Mammary epithelial cell (primary cell): ENCODE measurements at regions of chr17 and their contacts with region 1.

Region 1: GRCh38 chr17:42138749-42139492 is 15.9 kb downstream of the RAB5C start:
- DNase-seq: no peak
- H3K4me3 ChIP-seq: no peak overlapping the region
- H3K27ac ChIP-seq: no peak overlapping the region
- H3K4me1 ChIP-seq: peaks cover 7% of the 10 kb centered on the region
- H3K27me3 ChIP-seq: no peaks in the 10 kb centered on the region
- CTCF ChIP-seq: no peak

Region 2: DNA sequence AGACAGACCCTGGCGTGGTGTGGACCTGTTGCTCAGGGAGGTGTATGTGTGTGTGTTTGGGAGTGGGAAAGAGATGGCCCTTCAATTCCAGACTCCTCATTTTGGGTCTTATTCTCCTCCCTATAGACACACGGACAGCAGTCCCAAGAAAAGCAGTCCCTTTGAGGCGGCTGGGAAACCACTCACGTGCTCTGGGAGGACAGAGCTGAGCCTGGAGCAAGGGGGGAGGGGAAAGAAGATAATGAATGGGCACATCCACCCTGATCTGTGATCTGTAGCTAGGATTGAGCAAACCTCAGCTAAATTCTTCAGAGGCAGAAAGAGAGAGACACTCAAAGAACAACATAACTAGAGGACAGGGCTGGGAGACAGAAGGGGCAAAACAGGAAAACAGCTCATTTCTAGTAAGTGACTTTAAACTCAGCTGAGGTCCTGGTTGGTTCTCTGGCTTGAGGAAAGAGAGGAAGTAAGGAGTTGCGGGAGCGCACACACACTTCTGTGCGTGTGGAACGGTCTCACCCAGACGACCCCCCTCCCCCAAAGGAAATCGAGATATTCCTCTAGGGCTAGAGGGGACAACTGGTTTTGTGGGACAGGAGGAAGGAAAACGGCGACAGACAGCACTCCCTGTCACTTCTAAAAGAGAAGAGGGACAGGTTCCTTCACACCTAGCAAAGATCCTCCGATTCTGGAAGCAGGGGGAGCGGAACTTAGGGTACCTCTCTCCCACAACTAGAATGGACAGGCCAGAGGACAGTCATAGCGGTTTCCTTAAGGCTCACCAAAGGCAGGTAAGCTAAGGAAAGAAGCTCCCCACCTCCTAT is 15.2 kb after region 1 on chr17:
- CTCF ChIA-PET with region 1: no interaction called
- dilution Hi-C with region 1: no loop called
- in situ Hi-C with region 1: no loop called
- intact Hi-C with region 1: loop called (anchors 2 kb)
- DNase-seq: no peak
- H3K4me3 ChIP-seq: peak overlapping the region; percentile 57 to 80 (median 69)
- H3K27ac ChIP-seq: peak overlapping the region; percentile 37
- H3K4me1 ChIP-seq: peaks cover 10% of the 10 kb centered on the region
- H3K27me3 ChIP-seq: no peaks in the 10 kb centered on the region
- CTCF ChIP-seq: no peak

Region 3: DNA sequence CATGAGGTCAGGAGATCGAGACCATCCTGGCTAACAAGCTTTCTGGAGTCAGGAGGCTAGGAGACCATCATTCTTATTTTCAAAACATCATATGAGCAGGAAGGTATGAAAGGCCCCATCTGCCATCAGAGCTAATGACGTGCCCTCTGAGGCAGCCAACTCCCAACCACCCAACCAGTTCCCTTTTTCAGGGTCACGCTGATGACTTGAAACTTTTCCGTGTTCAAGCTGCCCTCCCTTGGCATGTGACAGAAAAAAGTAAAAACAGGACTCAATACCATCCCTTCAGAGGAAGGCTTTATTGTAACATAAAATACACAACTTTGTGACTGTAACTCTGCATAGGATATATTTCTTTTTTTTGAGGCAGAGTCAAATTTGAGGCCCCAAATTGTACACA is 60.0 kb after region 1 on chr17:
- CTCF ChIA-PET with region 1: no interaction called
- dilution Hi-C with region 1: no loop called
- in situ Hi-C with region 1: no loop called
- intact Hi-C with region 1: no loop called
- DNase-seq: no peak
- H3K4me3 ChIP-seq: no peak overlapping the region
- H3K27ac ChIP-seq: no peak overlapping the region
- H3K4me1 ChIP-seq: no peaks in the 10 kb centered on the region
- H3K27me3 ChIP-seq: no peaks in the 10 kb centered on the region
- CTCF ChIP-seq: no peak

Region 4: DNA sequence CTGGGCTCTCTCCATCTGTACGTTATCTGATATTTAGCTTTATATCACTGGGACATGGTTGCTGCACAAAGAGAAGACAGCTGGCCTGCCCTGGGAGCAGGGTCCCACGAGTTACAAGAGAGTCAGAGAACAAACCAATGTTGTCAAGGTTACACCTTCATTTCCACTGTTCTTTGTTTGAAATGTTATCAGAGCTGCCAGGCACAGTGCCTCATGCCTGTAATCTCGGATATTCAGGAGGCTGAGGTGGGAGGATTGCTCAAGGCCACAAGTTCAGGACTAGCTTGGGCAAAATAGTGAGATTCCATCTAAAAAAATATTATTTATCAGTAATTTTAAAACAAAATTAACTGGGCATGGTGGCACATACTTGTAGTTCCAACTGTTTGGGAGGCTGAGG is 354.4 kb after region 1 on chr17:
- CTCF ChIA-PET with region 1: no interaction called
- dilution Hi-C with region 1: no loop called
- in situ Hi-C with region 1: no loop called
- intact Hi-C with region 1: no loop called
- DNase-seq: no peak
- H3K4me3 ChIP-seq: no peak overlapping the region
- H3K27ac ChIP-seq: no peak overlapping the region
- H3K4me1 ChIP-seq: no peaks in the 10 kb centered on the region
- H3K27me3 ChIP-seq: no peaks in the 10 kb centered on the region
- CTCF ChIP-seq: no peak